ENCODE measurements at regions of chr16 and their contacts with region 1.

Region 1: DNA sequence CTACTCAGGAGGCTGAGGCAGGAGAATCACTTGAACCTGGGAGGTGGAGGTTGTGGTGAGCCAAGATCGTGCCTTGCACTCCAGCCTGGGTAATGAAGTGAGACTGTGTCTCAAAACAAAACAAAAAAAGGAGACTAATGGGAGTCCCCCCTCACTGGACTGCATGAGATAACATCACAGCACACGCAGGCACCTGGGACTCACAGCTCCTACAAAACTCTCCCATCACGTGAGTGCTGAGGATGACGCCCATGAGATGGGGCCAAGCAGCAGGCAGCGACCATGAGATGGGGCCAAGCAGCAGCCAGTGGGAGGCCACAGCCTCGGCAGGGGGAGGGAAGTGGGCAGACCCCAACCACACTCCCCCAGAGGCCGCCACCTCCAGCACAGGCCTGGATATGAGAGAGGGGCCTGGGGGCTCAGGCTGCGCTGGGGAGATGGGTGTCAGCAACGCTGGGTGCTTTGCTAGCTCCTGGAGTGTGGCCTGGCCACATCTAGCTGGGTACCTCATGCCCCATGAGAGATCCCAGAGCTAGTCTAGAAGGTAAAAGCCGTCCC is 15.4 kb downstream of the DNAAF8 start:
- DNase-seq: no peak
- ATAC-seq: no peak
- H3K4me3 ChIP-seq: no peak overlapping the region
- H3K27ac ChIP-seq: no peak overlapping the region
- H3K4me1 ChIP-seq: no peaks in the 10 kb centered on the region
- H3K27me3 ChIP-seq: no peaks in the 10 kb centered on the region
- CTCF ChIP-seq: no peak

Region 2: DNA sequence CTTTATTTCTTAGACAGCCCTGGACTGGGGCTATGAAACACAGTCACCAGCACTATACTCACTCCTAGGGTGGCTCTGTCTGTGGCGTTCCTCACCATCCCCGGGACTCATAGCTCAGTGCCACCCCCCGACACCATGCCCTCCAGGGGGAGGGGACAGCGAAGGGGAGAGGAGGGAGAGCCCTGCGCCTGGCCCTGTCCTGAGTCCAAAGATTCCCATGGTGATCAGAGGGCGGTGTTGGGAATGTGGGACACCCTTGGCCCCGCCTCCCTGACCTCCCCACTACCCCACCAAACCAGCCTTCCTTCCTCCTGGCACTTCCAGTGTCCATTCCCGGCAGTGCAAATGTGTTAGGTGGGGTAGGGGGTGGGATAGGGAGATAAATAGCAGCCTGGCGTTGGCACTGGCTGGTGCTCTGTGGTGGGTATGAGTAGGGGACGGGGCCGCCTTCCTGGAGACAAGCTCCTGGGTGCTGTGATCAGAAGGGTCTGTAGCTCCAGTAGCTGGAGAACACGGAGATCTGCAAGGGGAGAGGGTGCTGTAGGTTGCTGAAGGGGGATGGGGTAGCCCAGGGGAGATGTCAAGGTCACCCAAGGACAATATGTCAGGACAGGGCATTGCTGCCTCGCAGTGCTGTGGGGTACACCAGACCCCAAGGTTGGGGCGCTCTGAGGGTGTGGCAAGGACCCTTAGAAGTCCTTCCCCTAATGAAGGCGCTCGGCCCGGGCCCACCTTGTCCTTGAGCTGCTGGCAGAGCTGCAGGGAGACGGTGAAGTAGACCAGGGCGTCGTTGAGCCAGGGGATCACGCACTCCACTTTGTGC is 47.4 kb after region 1 on chr16:
- CTCF ChIA-PET with region 1: interaction called, 10 read pairs
- POLR2A ChIA-PET with region 1: no interaction called
- in situ Hi-C with region 1: no loop called
- intact Hi-C with region 1: no loop called
- DNase-seq: no peak
- ATAC-seq: no peak
- H3K4me3 ChIP-seq: no peak overlapping the region
- H3K27ac ChIP-seq: no peak overlapping the region
- H3K4me1 ChIP-seq: peaks cover 12% of the 10 kb centered on the region
- H3K27me3 ChIP-seq: no peaks in the 10 kb centered on the region
- CTCF ChIP-seq: no peak

Region 3: GRCh38 chr16:4892361-4893102 is 142.8 kb after region 1 on chr16:
- CTCF ChIA-PET with region 1: no interaction called
- POLR2A ChIA-PET with region 1: no interaction called
- in situ Hi-C with region 1: no loop called
- intact Hi-C with region 1: no loop called
- DNase-seq: no peak
- ATAC-seq: peak; percentile 5; the same call in 1 of the 2 replicates
- H3K4me3 ChIP-seq: no peak overlapping the region
- H3K27ac ChIP-seq: no peak overlapping the region
- H3K4me1 ChIP-seq: peaks cover 6% of the 10 kb centered on the region
- H3K27me3 ChIP-seq: no peaks in the 10 kb centered on the region
- CTCF ChIP-seq: no peak

Region 4: DNA sequence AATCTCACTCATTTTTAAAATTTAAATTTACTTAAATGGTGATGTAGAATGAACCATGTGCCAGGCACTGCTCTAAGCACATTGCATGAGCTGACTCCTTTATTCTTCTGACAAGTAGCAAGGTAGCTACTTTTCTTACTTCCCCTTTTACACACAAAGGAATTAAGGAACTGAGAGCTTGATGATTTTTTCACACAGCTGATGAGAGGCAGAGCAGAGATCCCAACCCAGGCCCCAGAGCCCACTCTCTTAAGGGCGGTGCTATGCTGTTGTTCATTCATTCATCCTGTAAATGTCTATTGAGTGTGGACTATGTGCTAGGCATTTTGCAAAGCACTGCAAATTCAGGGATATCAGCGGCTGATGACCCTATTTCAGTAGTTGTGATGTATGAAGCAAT is 226.3 kb after region 1 on chr16:
- CTCF ChIA-PET with region 1: no interaction called
- POLR2A ChIA-PET with region 1: interaction called, 21 read pairs
- in situ Hi-C with region 1: no loop called
- intact Hi-C with region 1: no loop called
- DNase-seq: no peak
- ATAC-seq: 0 out of 2 replicates have a peak, but pooled peaks have one; percentile 43
- H3K4me3 ChIP-seq: no peak overlapping the region
- H3K27ac ChIP-seq: no peak overlapping the region
- H3K4me1 ChIP-seq: no peaks in the 10 kb centered on the region
- H3K27me3 ChIP-seq: peaks cover 2% of the 10 kb centered on the region; the same call in 1 of the 2 replicates
- CTCF ChIP-seq: no peak